ENCODE measurements at regions of chr22 and their contacts with region 1.

Region 1: DNA sequence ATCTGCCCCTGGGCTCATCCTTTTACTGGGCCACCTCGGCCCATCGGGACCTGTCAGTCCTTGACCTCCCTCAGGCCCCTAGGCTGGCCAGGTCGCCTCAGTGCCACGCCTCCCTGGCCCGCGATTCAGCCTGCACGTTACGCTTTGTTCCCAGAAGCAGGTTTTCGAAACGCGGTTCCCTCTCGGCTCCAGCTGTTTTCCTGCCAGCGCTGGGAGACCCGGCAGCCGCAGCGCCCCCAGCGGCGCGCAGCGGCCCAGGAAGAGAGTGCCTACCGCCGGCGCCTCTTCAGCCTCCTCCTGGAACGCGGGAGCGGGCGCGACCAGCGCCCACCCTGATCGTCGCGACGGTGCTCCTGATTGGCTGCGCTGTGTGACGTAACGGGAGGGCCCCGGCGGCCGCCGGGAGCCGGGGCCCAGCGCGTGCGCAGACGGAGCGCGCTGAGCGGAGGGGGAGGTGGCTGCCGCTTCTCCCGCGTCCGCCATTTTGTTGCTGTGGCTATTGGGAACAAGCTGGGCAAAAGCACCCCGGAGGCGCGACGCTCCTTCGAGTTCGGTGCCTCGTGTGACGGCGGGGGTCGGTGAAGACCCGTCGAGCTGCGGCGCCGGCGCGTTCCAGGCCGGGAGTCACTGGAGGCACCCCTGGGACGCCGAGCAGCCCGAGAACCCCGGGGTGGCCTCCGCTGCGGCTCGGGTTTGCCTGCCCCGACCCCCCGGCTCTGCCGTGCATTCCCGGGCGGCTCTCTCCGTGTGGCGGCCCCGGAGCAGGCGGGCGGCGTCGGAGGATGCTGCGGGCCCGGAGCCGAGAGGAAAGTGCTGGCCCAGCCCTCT is at the start of gene CRKL:
- DNase-seq: peak; percentile 97 to 98
- ATAC-seq: peak; percentile 99 to 100 (median 100)
- H3K4me3 ChIP-seq: peak within 1 kb of the TSS; percentile 66 to 99 (median 90)
- H3K27ac ChIP-seq: peak within 1 kb of the TSS; percentile 77 to 99 (median 96)
- H3K4me1 ChIP-seq: peaks cover 6 to 41% (median 35%) of the 10 kb centered on the region in 9 donors
- H3K27me3 ChIP-seq: no peaks in the 10 kb centered on the region
- CTCF ChIP-seq: peak; percentile 87 to 99 (median 96)
- total RNA-seq, gene CRKL: 43.3 to 76.9 (median 56.5) TPM

Region 2: GRCh38 chr22:20725987-20726558 is 191.1 kb before region 1 on chr22:
- intact Hi-C with region 1: no loop called
- DNase-seq: no peak
- ATAC-seq: no peak
- H3K4me3 ChIP-seq: no peak overlapping the region
- H3K27ac ChIP-seq: no peak overlapping the region
- H3K4me1 ChIP-seq: peaks cover 0 to 8% (median 0%) of the 10 kb centered on the region in 9 donors
- H3K27me3 ChIP-seq: no peaks in the 10 kb centered on the region
- CTCF ChIP-seq: no peak

Region 3: GRCh38 chr22:20858615-20859416 is 58.4 kb before region 1 on chr22 and contains the starts of genes PI4KA and SNAP29:
- intact Hi-C with region 1: loop called in 4 of 10 experiments (anchors 2 to 10 kb)
- DNase-seq: peak; percentile 99
- ATAC-seq: peak; percentile 97 to 98 (median 97)
- H3K4me3 ChIP-seq: peak within 1 kb of the TSS; percentile 72 to 98 (median 87)
- H3K27ac ChIP-seq: peak within 1 kb of the TSS; percentile 74 to 97 (median 92)
- H3K4me1 ChIP-seq: peaks cover 13 to 57% (median 30%) of the 10 kb centered on the region in 9 donors
- H3K27me3 ChIP-seq: no peaks in the 10 kb centered on the region
- CTCF ChIP-seq: no peak
- total RNA-seq, gene PI4KA: 34.8 to 55.2 (median 40.8) TPM
- total RNA-seq, gene SNAP29: 20.6 to 43.6 (median 26.8) TPM

Region 4: DNA sequence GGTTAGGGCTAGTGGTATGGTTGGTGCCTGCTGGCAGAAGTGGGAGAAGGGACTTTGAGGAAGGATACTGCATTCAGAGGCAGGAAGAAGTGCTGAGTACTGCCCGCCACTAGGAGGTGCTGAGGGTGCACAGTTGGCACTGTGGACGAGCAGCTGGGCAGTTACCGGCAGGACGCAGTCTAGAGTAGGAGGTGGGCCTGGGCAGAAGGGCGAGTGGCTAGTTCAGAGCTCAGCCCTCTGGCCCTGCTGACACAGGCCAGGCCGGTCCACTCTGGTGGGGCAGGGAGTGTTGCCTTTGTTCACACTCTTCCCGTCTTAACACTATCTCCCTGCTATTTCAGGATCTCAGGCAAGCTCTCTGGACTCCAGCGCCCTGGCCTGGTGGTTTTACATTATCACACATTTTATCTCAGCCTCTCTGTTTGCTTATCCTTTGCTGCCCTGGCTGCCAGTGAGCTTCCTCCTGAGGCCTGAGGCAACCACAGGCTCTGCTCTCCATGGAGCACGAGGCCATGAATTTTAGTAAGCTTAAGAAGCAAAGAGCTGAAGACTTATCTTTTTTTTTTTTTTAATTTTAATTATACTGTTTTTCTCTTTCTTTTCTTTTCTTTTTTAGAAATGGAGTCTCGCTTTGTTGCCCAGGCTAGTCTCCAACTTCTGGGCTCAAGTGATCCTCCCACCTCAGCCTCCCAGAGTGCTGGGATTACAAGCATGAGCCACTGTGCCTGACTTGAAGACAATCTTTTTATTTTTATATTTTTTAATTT is 31.5 kb before region 1 on chr22:
- intact Hi-C with region 1: loop called in 1 of 10 experiments (anchors 1 kb)
- DNase-seq: peak; percentile 77 to 81
- ATAC-seq: peak; percentile 91 to 96 (median 95)
- H3K4me3 ChIP-seq: no peak overlapping the region
- H3K27ac ChIP-seq: peak overlapping the region in 9 of 10 donors; percentile 7 to 85 (median 67)
- H3K4me1 ChIP-seq: peaks cover 0 to 19% (median 12%) of the 10 kb centered on the region in 9 donors
- H3K27me3 ChIP-seq: no peaks in the 10 kb centered on the region
- CTCF ChIP-seq: peak; percentile 67 to 85 (median 81)

Region 5: GRCh38 chr22:20940186-20940651 is 23.0 kb after region 1 on chr22:
- intact Hi-C with region 1: no loop called
- DNase-seq: no peak
- ATAC-seq: no peak
- H3K4me3 ChIP-seq: no peak overlapping the region
- H3K27ac ChIP-seq: peak overlapping the region in 1 of 10 donors; percentile 1
- H3K4me1 ChIP-seq: peaks cover 10 to 82% (median 64%) of the 10 kb centered on the region in 9 donors
- H3K27me3 ChIP-seq: no peaks in the 10 kb centered on the region
- CTCF ChIP-seq: no peak

Region 6: GRCh38 chr22:20965104-20965887 is 48.1 kb after region 1 on chr22:
- intact Hi-C with region 1: loop called in 1 of 10 experiments (anchors 10 kb)
- DNase-seq: no peak
- ATAC-seq: peak in 1 of 8 donors; percentile 14
- H3K4me3 ChIP-seq: peak overlapping the region in 9 of 10 donors; percentile 36 to 48 (median 42)
- H3K27ac ChIP-seq: no peak overlapping the region
- H3K4me1 ChIP-seq: peaks cover 3 to 30% (median 10%) of the 10 kb centered on the region in 9 donors
- H3K27me3 ChIP-seq: peaks cover 0 to 36% (median 16%) of the 10 kb centered on the region in 7 donors
- CTCF ChIP-seq: no peak

Region 7: DNA sequence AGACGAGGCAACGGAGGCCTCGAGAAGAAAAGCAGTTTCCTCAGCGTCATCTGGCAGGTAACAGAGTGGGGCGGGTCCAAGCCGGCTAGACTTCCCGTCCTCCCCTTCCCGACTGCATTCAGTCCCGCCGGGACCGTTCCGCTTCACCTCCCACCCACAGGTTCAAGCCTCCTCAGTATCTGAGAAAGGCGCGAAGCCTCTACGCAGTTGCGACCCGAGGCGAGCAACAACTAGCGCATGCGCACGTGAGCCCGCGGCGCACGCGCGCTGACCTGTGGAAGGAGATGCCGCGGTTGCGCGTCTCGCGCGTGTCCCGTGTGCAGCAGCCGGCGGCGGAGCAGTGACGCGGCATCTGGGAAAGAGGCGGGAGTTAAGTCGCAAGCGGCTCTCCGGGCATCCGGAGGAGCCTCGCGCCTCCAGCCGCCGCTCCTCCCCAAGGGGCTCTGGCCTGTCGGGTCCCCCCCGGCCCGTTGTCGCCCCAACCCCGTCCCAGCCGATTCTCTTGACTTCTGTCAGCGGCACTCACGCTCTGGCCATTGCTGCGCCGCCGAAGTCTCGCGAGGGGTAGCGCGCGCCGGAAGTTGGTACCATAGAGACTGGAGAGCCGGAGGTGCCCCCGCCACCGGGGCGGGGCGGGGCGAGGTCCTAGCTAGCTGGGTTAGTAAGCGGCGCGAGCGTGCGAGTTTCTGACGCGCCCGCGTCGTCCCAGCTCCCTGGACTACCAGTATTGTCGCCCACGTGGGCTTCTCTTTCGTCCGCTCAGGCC is 84.5 kb after region 1 on chr22 and contains the start of gene THAP7:
- intact Hi-C with region 1: loop called in 1 of 10 experiments (anchors 10 kb)
- DNase-seq: peak; percentile 96 to 98
- ATAC-seq: peak; percentile 96 to 98 (median 97)
- H3K4me3 ChIP-seq: peak within 1 kb of the TSS; percentile 54 to 82 (median 73)
- H3K27ac ChIP-seq: peak within 1 kb of the TSS; percentile 92 to 99 (median 98)
- H3K4me1 ChIP-seq: peaks cover 15 to 39% (median 33%) of the 10 kb centered on the region in 9 donors
- H3K27me3 ChIP-seq: no peaks in the 10 kb centered on the region
- CTCF ChIP-seq: no peak
- total RNA-seq, gene THAP7: 15.5 to 26.3 (median 17.5) TPM

Measured in heart right ventricle (tissue), 16 donors.